AG04449 (cell line): ENCODE measurements at regions of chr2 and their contacts with region 1.

Region 1: GRCh38 chr2:200483729-200484198 is 26.1 kb downstream of the KCTD18 start:
- DNase-seq: no peak
- H3K4me3 ChIP-seq: no peak overlapping the region
- CTCF ChIP-seq: peak; percentile 49

Region 2: GRCh38 chr2:199979832-199980628 is 503.7 kb before region 1 on chr2:
- CTCF ChIA-PET with region 1: interaction called, 242 read pairs
- POLR2A ChIA-PET with region 1: interaction called, 4 read pairs
- DNase-seq: peak; percentile 10
- H3K4me3 ChIP-seq: peak overlapping the region; percentile 7; the same call in 1 of the 2 replicates
- CTCF ChIP-seq: peak; percentile 56

Region 3: GRCh38 chr2:200306196-200306930 is 177.4 kb before region 1 on chr2 and contains the start of gene SPATS2L:
- CTCF ChIA-PET with region 1: interaction called, 14 read pairs
- POLR2A ChIA-PET with region 1: no interaction called
- DNase-seq: no peak
- H3K4me3 ChIP-seq: peak within 1 kb of the TSS; percentile 77
- CTCF ChIP-seq: no peak

Region 4: GRCh38 chr2:200471324-200471848 is 12.4 kb before region 1 on chr2:
- CTCF ChIA-PET with region 1: interaction called, 48 read pairs
- POLR2A ChIA-PET with region 1: no interaction called
- DNase-seq: no peak
- H3K4me3 ChIP-seq: no peak overlapping the region
- CTCF ChIP-seq: peak; percentile 52

Region 5: GRCh38 chr2:200509612-200510433 is 26.1 kb after region 1 on chr2 and contains the start of gene KCTD18:
- CTCF ChIA-PET with region 1: interaction called, 10 read pairs
- POLR2A ChIA-PET with region 1: no interaction called
- DNase-seq: no peak
- H3K4me3 ChIP-seq: peak within 1 kb of the TSS; percentile 77
- CTCF ChIP-seq: peak; percentile 97

Region 6: GRCh38 chr2:200950378-200950777 is 466.6 kb after region 1 on chr2:
- CTCF ChIA-PET with region 1: no interaction called
- POLR2A ChIA-PET with region 1: no interaction called
- DNase-seq: no peak
- H3K4me3 ChIP-seq: no peak overlapping the region
- CTCF ChIP-seq: no peak